A673 (cell line): ENCODE measurements at regions of chr18 and their contacts with region 1.

Region 1: GRCh38 chr18:21672521-21673267 is 31.9 kb downstream of the ABHD3 start:
- DNase-seq: no peak
- H3K4me3 ChIP-seq: no peak overlapping the region
- H3K27ac ChIP-seq: no peak overlapping the region
- H3K4me1 ChIP-seq: no peaks in the 10 kb centered on the region
- H3K27me3 ChIP-seq: no peaks in the 10 kb centered on the region
- CTCF ChIP-seq: no peak

Region 2: DNA sequence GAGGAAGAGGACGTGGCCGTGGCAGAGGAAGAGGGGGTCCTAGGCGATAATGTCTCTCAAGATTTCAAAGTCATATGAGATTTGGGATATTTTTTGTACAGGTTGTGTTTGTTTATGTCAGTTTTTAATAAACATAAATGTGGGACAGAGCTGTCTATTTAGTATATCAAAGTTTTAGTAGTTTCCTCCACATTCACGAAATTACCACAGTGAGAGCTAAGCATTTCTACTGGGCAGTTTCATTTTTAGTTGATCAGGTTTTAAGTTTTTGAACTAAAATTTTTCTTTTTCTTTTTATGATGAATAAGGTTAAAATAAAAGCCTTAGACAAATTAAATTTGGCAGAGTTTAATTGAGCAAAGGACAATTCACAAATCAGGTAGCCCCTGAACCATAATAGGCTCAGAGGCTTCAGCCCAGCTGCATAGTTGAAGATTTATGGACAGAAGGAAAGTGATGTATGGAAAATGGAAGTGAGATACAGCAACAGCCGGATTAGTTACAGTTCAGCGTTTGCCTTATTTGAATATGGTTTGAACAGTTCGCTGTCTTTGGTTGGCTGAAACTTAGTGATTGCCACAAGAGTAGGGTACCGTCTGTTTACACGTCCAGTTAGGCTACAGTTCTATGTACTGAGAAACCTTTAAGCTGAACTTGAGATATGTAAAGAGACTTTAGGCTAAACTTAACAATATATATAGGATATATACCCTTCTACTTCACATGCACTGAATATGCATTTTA is 43.4 kb before region 1 on chr18:
- CTCF ChIA-PET with region 1: no interaction called
- POLR2A ChIA-PET with region 1: no interaction called
- intact Hi-C with region 1: loop called (anchors 10 kb)
- DNase-seq: no peak
- H3K4me3 ChIP-seq: no peak overlapping the region
- H3K27ac ChIP-seq: no peak overlapping the region
- H3K4me1 ChIP-seq: no peaks in the 10 kb centered on the region
- H3K27me3 ChIP-seq: no peaks in the 10 kb centered on the region
- CTCF ChIP-seq: no peak